PC-9 (cell line): ENCODE measurements at regions of chr5 and their contacts with region 1.

Region 1: GRCh38 chr5:168346441-168346840 is 55.0 kb downstream of the WWC1 start:
- DNase-seq: peak; percentile 68 to 96
- H3K4me3 ChIP-seq: peak overlapping the region; percentile 27; the same call in 1 of the 2 replicates
- H3K27ac ChIP-seq: peak overlapping the region; percentile 71
- H3K4me1 ChIP-seq: peaks cover 83% of the 10 kb centered on the region
- H3K27me3 ChIP-seq: no peaks in the 10 kb centered on the region
- CTCF ChIP-seq: no peak

Region 2: DNA sequence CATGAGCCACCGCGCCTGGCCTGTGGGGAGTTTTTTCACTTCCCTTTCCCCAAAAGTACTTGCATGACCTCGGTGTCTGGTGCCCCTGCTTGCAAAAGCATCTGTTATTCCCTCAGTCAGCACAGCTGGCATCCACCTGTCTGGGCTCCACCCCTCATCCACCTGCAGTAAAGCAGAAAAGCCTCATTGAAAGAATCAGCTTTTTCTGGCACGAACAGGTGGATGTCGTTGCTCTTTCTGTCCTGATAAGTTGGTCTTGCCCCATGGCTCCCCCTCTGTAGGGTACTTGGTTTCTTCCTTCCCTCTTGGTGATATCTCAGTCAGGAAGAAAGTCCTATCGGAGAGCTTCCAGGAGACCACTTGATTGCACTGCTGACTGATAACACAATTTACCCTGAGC is 17.6 kb before region 1 on chr5:
- CTCF ChIA-PET with region 1: interaction called, 11 read pairs
- POLR2A ChIA-PET with region 1: interaction called, 7 read pairs
- intact Hi-C with region 1: loop called (anchors 1 kb)
- DNase-seq: peak in 1 of 2 experiments; percentile 65
- H3K4me3 ChIP-seq: peak overlapping the region; percentile 39; the same call in 1 of the 2 replicates
- H3K27ac ChIP-seq: peak overlapping the region; percentile 78
- H3K4me1 ChIP-seq: peaks cover 99% of the 10 kb centered on the region
- H3K27me3 ChIP-seq: no peaks in the 10 kb centered on the region
- CTCF ChIP-seq: no peak

Region 3: DNA sequence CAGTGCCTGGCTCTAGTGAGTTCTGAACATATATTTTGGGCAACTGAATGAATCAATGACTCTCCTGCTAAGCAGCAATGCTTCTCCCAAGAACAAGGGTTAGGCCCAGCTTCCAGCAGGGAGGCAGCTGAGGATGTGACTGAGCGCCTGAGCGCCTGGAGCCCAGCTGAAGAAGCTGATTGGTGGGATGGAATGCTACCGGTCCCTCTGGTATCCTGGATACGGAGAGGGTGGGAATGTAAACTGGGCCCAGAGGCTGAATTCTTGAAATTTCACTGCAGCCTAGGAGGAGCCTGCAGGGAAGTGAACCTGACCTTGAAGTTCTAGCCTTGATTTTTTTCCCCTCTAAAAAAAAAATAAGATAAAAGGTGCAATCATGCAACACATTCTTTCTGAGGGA is 11.7 kb before region 1 on chr5:
- CTCF ChIA-PET with region 1: interaction called, 4 read pairs
- POLR2A ChIA-PET with region 1: interaction called, 9 read pairs
- intact Hi-C with region 1: loop called (anchors 1 kb)
- DNase-seq: peak; percentile 92 to 96
- H3K4me3 ChIP-seq: no peak overlapping the region
- H3K27ac ChIP-seq: peak overlapping the region; percentile 62
- H3K4me1 ChIP-seq: peaks cover 75% of the 10 kb centered on the region
- H3K27me3 ChIP-seq: no peaks in the 10 kb centered on the region
- CTCF ChIP-seq: no peak